Vagina (tissue), 2 donors: ENCODE measurements at regions of chr10 and their contacts with region 1.

Region 1: GRCh38 chr10:22340362-22341189 is 4.7 kb upstream of the SPAG6 start:
- DNase-seq: no peak
- H3K4me3 ChIP-seq: peak overlapping the region; percentile 75 to 91
- H3K27ac ChIP-seq: peak overlapping the region; percentile 77
- H3K4me1 ChIP-seq: peaks cover 27% of the 10 kb centered on the region
- H3K27me3 ChIP-seq: peaks cover 35% of the 10 kb centered on the region
- CTCF ChIP-seq: no peak
- POLR2A ChIP-seq: peak in 1 of 2 donors; percentile 15

Region 2: GRCh38 chr10:21495752-21496342 is 844.7 kb before region 1 on chr10:
- intact Hi-C with region 1: loop called (anchors 10 kb)
- DNase-seq: no peak
- H3K4me3 ChIP-seq: peak overlapping the region; percentile 77 to 82
- H3K27ac ChIP-seq: peak overlapping the region; percentile 68
- H3K4me1 ChIP-seq: peaks cover 21% of the 10 kb centered on the region
- H3K27me3 ChIP-seq: no peaks in the 10 kb centered on the region
- CTCF ChIP-seq: peak; percentile 80 to 100 (median 95)
- POLR2A ChIP-seq: no peak

Region 3: DNA sequence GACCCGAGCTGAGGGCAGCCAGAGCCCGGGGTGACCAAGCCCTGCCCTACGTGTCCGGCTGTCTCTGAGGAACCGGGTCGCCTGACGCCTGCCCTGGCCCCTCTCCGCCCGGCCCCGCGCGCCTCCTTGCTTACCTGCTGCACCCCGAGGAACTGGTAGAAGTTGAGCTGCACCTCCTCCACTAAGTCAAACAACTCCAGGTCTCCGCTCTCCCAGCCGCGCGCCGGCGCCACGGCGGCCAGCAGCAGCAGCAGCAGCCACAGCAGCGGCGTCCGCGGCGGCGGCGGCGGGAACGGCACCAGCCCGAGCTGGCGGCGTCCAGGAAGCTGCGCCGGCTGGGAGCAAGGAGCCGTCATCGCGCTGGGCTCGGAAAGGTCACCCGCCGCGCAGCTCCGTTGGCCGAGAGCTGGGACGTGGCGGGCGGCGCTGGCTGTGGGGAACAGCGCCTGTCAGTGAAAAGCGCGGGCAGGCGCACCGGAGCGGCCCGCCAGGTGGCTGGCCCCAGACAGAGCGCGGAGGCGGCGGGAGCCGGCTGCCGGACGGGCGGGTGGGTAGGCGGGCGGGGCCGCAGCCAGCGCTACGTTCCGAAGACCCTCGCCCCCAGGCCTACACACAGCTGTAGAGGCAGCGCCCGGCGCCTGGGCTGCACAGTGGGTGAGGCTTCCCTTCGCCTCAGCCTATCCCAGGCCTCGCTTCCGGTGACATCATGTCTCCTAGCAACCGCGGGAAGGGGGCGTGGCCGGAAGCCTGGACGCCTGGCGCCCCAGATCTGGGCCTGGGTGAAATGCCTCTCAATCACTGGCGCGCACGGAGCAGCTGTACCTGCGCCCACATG is 337.3 kb before region 1 on chr10 and contains the start of gene DNAJC1:
- intact Hi-C with region 1: loop called (anchors 10 kb)
- DNase-seq: peak in 1 of 2 donors; percentile 97
- H3K4me3 ChIP-seq: peak within 1 kb of the TSS; percentile 63 to 85
- H3K27ac ChIP-seq: peak within 1 kb of the TSS; percentile 93
- H3K4me1 ChIP-seq: peaks cover 23% of the 10 kb centered on the region
- H3K27me3 ChIP-seq: no peaks in the 10 kb centered on the region
- CTCF ChIP-seq: no peak
- POLR2A ChIP-seq: peak in 1 of 2 donors; percentile 88
- total RNA-seq, gene DNAJC1: 40.0 TPM

Region 4: DNA sequence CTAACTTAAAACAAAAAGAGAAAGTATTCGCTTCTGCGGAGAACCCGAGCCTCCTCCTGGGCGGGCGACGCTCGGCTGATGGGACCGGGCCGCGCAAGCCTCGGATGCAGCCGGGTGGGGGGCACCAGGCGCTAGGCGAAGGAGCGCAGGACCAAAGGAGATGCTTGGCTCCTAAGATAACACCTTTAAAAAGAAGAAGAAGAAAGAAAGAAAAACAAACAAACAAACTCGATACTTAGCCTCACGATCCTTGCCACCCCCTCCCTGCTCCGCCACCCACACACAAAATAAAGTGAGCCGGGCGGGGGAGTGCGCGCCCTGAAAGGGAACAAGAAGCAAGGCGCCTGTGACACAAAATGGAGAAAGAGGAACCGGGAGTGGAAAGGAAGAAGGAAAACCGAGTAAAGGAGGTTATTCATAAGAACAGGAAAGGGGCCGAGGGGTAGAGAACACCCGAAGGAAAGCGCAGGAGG is 88.8 kb before region 1 on chr10:
- intact Hi-C with region 1: loop called (anchors 5 kb)
- DNase-seq: no peak
- H3K4me3 ChIP-seq: peak overlapping the region; percentile 65 to 72
- H3K27ac ChIP-seq: peak overlapping the region; percentile 98
- H3K4me1 ChIP-seq: peaks cover 10% of the 10 kb centered on the region
- H3K27me3 ChIP-seq: no peaks in the 10 kb centered on the region
- CTCF ChIP-seq: no peak
- POLR2A ChIP-seq: no peak

Region 5: DNA sequence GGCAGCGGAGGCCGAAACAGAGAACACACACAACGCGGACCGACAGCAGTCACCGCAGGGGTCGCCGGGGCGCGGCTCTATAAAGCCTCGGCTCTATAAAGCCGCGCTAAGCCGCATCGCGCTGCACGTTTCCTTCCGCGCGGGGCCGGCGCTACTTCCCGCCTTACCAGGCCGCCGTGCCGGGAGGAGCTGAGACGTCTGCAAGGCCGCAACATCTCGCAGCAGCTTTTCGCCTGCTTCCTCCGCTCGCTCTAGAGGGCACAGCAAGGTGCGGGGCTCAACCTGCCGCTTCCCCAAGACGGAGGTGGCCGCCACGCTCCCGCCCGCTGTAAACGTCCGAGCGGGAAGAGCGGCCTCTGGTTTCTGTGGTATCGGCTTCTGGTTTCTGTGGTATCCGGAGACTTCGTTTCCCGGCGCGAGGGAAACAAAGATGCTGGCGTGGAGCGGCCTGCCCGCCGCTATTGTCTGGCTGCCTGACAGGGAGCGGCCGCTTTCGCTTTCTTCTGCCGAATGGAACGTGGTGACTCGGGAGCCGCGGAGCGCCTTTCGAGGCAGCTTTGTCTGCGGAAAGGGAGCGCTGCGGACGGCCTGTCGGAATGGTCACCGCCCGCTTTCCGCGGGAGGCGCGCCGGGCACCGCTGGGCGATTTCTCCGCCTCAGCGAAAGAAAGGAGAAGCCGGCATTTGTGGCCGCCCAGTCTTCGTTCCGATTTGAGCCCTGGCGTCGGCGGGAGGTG is 96.5 kb after region 1 on chr10:
- intact Hi-C with region 1: loop called (anchors 10 kb)
- DNase-seq: no peak
- H3K4me3 ChIP-seq: peak overlapping the region; percentile 62 to 67
- H3K27ac ChIP-seq: peak overlapping the region; percentile 90
- H3K4me1 ChIP-seq: peaks cover 29% of the 10 kb centered on the region
- H3K27me3 ChIP-seq: no peaks in the 10 kb centered on the region
- CTCF ChIP-seq: no peak
- POLR2A ChIP-seq: peak in 1 of 2 donors; percentile 78

Region 6: GRCh38 chr10:23095404-23095965 is 754.9 kb after region 1 on chr10 and contains the start of gene MSRB2:
- intact Hi-C with region 1: loop called (anchors 10 kb)
- DNase-seq: no peak
- H3K4me3 ChIP-seq: peak within 1 kb of the TSS; percentile 55 to 92
- H3K27ac ChIP-seq: peak within 1 kb of the TSS; percentile 95
- H3K4me1 ChIP-seq: peaks cover 24% of the 10 kb centered on the region
- H3K27me3 ChIP-seq: no peaks in the 10 kb centered on the region
- CTCF ChIP-seq: no peak
- POLR2A ChIP-seq: peak in 1 of 2 donors; percentile 94
- total RNA-seq, gene MSRB2: 15.2 TPM